MCF 10A (cell line): ENCODE measurements at regions of chr2 and their contacts with region 1.

Region 1: DNA sequence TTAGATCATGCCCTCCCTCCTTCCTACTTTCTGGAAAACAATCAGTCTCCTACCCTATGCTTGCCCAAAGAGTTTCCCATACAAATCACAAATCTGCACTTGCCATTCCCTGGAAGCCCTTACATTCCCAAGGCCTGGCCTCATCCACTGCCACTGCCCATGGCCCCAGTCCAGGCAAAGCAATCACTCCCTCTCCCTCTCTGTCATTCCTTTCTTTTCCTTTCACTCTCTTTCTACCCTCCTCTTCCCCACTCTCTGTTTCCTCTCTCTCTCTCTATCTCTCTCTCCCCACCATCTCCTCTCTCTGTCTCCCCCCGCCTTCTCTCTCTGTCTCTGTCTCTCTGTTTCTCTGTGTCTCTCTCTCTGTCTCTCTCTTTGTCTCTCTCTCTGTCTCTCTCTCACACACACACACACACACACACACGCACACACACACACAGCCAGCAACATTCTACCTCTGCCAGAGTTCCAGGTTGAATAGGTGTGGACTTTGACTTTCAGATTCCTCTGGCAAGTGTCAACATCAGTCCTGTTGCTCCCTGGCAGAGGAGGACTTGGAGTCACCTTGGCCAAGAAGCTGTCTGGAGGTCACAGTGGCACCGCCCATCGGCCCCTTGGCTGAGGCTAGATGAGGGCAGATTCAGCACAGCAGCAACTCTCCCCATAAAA is 43.7 kb upstream of the NAT8 start:
- DNase-seq: no peak
- H3K4me3 Mint-ChIP-seq: no peak overlapping the region
- H3K27ac Mint-ChIP-seq: no peak overlapping the region
- H3K4me1 Mint-ChIP-seq: peaks cover 6% of the 10 kb centered on the region
- H3K27me3 Mint-ChIP-seq: peaks cover 21% of the 10 kb centered on the region
- CTCF ChIP-seq: no peak

Region 2: GRCh38 chr2:73700131-73700611 is 14.3 kb after region 1 on chr2:
- CTCF ChIA-PET with region 1: interaction called, 21 read pairs
- POLR2A ChIA-PET with region 1: interaction called, 5 read pairs
- intact Hi-C with region 1: no loop called
- DNase-seq: no peak
- H3K4me3 Mint-ChIP-seq: no peak overlapping the region
- H3K27ac Mint-ChIP-seq: no peak overlapping the region
- H3K4me1 Mint-ChIP-seq: no peaks in the 10 kb centered on the region
- H3K27me3 Mint-ChIP-seq: peaks cover 10% of the 10 kb centered on the region
- CTCF ChIP-seq: no peak

Region 3: DNA sequence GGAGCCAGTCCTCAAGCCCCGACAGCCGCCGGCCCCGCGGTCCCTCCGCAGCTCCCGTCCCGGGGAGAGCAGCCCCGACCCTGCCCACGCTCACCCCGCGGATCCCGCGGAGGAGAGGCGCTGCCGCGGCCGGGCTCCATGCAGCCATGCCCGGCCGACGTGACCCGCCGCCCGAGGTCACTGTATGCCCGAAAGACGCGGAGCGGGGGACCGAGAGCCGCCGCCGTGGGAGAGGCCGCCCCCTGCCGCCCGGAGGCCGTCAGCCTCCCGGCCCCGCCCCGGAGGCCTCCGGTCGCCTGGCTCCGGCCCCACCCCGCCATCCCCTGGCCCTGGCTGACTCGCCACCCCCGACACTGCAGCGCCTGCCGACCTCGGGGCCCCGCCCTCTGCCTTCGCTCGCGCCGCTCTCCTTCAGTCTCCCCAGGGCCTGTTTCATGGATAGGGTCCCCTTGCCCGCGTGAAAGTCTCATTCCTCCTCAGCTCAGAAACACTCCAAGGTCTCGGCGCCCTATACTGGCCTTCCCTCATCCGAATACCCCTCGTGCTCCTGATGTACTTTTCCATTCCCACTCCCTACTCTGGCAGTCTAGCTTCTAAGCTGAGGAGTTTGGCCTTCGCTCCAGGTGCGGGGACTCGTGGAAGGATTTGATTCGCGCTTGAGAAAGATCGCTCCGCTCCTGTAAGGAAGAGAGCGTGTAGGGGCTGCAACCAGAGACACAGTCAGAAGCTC is 462.0 kb after region 1 on chr2 and contains the start of gene BOLA3:
- CTCF ChIA-PET with region 1: no interaction called
- POLR2A ChIA-PET with region 1: no interaction called
- intact Hi-C with region 1: no loop called
- DNase-seq: peak; percentile 80
- H3K4me3 Mint-ChIP-seq: no peak within 1 kb of the TSS
- H3K27ac Mint-ChIP-seq: no peak within 1 kb of the TSS
- H3K4me1 Mint-ChIP-seq: no peaks in the 10 kb centered on the region
- H3K27me3 Mint-ChIP-seq: no peaks in the 10 kb centered on the region
- CTCF ChIP-seq: peak; percentile 70
- total RNA-seq, gene BOLA3: 72.5 and 83.8 TPM in 2 replicates

Region 4: DNA sequence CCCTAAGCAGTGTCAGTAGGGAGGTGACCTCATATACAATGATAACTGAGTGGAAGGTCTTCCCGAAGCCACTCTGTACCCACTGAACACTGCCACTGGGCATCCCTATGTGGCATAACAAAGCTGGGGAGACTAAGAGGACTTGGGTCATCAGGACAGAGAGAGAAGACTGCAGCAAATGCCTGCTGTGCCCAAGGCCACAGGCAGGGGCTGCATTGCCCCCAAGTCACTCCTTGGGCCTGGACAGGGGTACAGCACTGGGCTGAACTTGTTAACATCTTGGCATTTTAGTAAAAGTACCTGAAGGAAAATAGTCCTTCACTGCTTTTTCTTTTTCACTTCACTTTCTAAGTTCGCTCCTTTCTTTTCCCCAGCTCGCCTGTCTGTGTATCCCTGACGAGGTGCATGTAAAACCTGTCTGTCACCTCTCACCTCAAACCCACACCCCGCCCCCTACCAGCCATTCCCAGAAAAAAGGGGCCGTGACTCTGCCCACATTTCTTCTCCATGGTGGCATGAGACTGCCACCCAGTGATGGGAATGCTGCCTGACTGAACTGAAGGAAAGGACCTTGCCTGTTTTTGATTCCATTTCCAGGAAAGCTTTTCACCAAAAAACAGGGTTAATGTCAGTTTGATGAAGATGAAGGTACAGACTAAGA is 575.4 kb after region 1 on chr2:
- CTCF ChIA-PET with region 1: no interaction called
- POLR2A ChIA-PET with region 1: no interaction called
- intact Hi-C with region 1: loop called (anchors 5 kb)
- DNase-seq: peak; percentile 67
- H3K4me3 Mint-ChIP-seq: no peak overlapping the region
- H3K27ac Mint-ChIP-seq: peak overlapping the region; percentile 37
- H3K4me1 Mint-ChIP-seq: peaks cover 5% of the 10 kb centered on the region
- H3K27me3 Mint-ChIP-seq: no peaks in the 10 kb centered on the region
- CTCF ChIP-seq: peak; percentile 64